H1 (cell line): ENCODE measurements at regions of chr20 and their contacts with region 1.

Region 1: GRCh38 chr20:23034721-23035671 is at the start of gene SSTR4:
- DNase-seq: peak in 1 of 2 experiments; percentile 63
- H3K4me3 ChIP-seq: peak within 1 kb of the TSS; percentile 19 to 63 (median 26); a peak in 7 of 8 replicates
- H3K27ac ChIP-seq: no peak within 1 kb of the TSS
- H3K4me1 ChIP-seq: peaks cover 0 to 3% (median 0%) of the 10 kb centered on the region in 4 experiments; a peak in 1 of 7 replicates
- H3K27me3 ChIP-seq: peaks cover 21 to 66% (median 50%) of the 10 kb centered on the region in 4 experiments
- CTCF ChIP-seq: no peak
- EP300 ChIP-seq: no peak
- POLR2A ChIP-seq: no peak
- RAD21 ChIP-seq: no peak
- total RNA-seq, gene SSTR4: not detected in 2 replicates

Region 2: GRCh38 chr20:23023621-23024177 is 11.3 kb before region 1 on chr20:
- CTCF ChIA-PET with region 1: interaction called, 10 read pairs
- POLR2A ChIA-PET with region 1: no interaction called
- DNase-seq: peak in 1 of 2 experiments; percentile 57
- H3K4me3 ChIP-seq: no peak overlapping the region
- H3K27ac ChIP-seq: no peak overlapping the region
- H3K4me1 ChIP-seq: no peaks in the 10 kb centered on the region
- H3K27me3 ChIP-seq: no peaks in the 10 kb centered on the region; a peak in 1 of 7 replicates
- CTCF ChIP-seq: peak; percentile 53 to 77 (median 62)
- EP300 ChIP-seq: no peak
- POLR2A ChIP-seq: no peak
- RAD21 ChIP-seq: peak; percentile 52 to 58